Ascending aorta (tissue), 2 donors: ENCODE measurements at regions of chr7 and their contacts with region 1.

Region 1: DNA sequence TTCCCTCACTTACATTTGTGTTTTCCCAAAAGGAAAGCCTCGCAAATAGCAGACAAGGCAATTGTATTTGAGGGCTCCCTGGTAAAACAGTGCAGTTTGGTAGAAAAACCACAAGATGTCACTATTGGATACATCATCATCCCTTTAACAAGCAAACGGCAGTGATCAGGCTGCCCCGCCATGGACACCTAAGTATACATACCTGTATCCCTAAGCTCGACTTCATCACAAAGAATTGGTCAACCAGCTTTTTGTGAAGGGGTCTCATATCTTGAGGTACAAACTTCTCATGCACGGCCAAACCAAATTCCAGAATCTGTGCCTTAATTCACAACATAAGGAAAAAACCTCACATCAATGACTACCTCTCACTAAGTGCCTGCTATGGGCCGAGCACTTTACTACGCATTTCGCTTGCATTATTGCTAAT is 179.5 kb upstream of the IMMP2L start:
- DNase-seq: no peak
- H3K4me3 ChIP-seq: no peak overlapping the region
- H3K27ac ChIP-seq: no peak overlapping the region
- H3K4me1 ChIP-seq: no peaks in the 10 kb centered on the region
- H3K27me3 ChIP-seq: no peaks in the 10 kb centered on the region
- CTCF ChIP-seq: peak; percentile 39 to 73 (median 56)

Region 2: GRCh38 chr7:111486472-111487142 is 255.2 kb before region 1 on chr7:
- intact Hi-C with region 1: no loop called
- DNase-seq: no peak
- H3K4me3 ChIP-seq: no peak overlapping the region
- H3K27ac ChIP-seq: no peak overlapping the region
- H3K4me1 ChIP-seq: no peaks in the 10 kb centered on the region
- H3K27me3 ChIP-seq: no peaks in the 10 kb centered on the region
- CTCF ChIP-seq: peak; percentile 48 to 70 (median 57)

Region 3: DNA sequence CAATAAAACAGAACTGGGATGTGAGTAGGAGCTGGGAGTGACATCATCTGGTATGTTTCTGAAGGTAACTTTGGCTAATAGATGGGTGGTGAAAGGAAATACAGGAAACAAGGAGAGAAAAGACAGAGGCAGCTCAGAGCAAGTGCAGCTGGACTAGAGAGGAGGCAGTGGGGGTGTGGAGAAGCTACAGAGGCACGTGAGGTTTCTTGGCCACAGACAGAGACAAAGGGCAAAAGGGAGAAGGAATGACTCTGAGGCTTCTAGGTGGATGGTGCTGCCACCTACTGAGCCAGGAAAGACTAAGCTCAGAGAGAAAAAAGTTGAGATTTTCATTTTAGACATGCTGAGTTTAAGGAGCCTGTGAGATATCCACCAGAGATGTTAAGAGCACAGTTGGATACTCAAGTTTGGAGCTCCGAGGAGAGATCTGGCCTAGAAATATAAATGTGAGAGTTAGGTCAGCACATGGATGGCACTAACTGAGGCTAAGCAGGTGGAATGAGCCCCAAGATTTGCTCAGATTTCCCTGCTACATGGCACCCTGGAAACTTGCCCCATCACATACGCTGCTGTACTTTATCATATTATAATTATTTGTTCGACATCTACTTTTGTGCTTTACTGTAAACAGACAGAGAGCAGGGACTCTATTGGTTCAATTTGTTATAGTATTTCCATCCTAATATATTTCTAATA is 113.5 kb after region 1 on chr7:
- intact Hi-C with region 1: loop called (anchors 5 kb)
- DNase-seq: no peak
- H3K4me3 ChIP-seq: no peak overlapping the region
- H3K27ac ChIP-seq: no peak overlapping the region
- H3K4me1 ChIP-seq: no peaks in the 10 kb centered on the region
- H3K27me3 ChIP-seq: no peaks in the 10 kb centered on the region
- CTCF ChIP-seq: peak; percentile 14 to 59 (median 30)

Region 4: GRCh38 chr7:111975346-111975745 is 233.5 kb after region 1 on chr7:
- intact Hi-C with region 1: no loop called
- DNase-seq: no peak
- H3K4me3 ChIP-seq: no peak overlapping the region
- H3K27ac ChIP-seq: no peak overlapping the region
- H3K4me1 ChIP-seq: no peaks in the 10 kb centered on the region
- H3K27me3 ChIP-seq: no peaks in the 10 kb centered on the region
- CTCF ChIP-seq: no peak

Region 5: DNA sequence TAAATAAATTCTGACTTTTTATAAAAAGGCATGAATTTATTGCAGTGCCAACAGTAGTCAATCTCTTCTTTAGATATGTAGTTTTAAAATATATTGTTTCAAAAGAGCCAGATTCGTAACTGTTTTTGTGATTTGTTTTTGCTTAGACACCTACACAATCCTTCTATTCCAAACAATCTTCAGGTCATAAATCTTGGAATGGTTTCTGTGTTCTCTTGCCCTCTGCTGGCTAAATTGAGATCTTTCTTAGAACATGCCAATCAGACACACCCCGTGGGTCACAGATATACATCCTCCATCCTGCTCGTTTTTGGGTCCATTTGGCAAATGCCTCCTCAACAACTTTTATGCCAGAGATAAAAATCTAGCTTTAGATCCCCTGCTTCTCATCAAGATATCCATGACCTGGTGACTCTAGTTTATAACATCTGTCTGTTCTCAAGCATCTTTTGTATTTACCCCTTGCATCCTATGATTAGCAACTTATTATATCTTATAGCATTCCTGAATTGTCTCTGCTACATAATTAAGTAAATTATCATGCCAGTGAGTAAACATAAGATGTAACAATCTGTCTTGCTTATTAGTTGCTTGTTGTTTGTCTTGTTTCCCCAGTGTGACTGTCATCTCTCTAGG is 673.1 kb after region 1 on chr7:
- intact Hi-C with region 1: loop called (anchors 5 kb)
- DNase-seq: no peak
- H3K4me3 ChIP-seq: no peak overlapping the region
- H3K27ac ChIP-seq: no peak overlapping the region
- H3K4me1 ChIP-seq: no peaks in the 10 kb centered on the region
- H3K27me3 ChIP-seq: no peaks in the 10 kb centered on the region
- CTCF ChIP-seq: peak in 1 of 3 experiments; percentile 40

Region 6: DNA sequence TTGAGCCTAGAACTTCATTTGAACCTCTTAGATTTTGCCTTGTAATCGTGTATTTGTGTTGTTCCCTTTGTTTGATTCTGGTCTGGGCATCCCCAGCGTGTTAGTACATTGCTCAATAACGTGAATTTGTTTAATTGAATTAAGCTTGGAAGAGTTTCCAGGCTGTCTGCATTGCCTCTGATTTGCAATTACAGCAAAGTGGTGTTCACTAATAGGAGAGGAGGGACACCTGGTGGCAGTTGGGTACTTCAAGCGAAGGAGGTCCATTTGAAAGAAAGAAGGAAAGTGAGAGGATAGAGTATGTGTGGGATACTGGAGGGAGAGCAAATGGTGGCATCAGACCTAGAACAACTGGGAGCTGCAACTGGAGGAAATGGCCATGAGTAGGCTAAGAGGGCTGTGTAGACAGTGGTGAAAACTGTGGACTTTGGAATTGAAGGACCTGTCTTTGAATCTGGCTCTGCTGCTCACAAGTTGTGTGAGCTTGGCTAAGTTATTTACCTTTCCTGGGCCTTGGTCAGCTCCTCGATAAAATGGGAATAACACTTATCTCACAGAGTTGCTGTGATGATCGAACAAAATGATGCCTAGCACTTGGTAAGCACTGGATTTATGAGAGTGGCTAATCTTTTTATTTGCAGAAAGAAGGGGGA is 754.1 kb after region 1 on chr7:
- intact Hi-C with region 1: loop called (anchors 5 kb)
- DNase-seq: peak in 1 of 2 donors; percentile 74
- H3K4me3 ChIP-seq: no peak overlapping the region
- H3K27ac ChIP-seq: no peak overlapping the region
- H3K4me1 ChIP-seq: no peaks in the 10 kb centered on the region
- H3K27me3 ChIP-seq: no peaks in the 10 kb centered on the region
- CTCF ChIP-seq: peak; percentile 63 to 79 (median 68)